ENCODE measurements at regions of chr13 and their contacts with region 1.

Region 1: DNA sequence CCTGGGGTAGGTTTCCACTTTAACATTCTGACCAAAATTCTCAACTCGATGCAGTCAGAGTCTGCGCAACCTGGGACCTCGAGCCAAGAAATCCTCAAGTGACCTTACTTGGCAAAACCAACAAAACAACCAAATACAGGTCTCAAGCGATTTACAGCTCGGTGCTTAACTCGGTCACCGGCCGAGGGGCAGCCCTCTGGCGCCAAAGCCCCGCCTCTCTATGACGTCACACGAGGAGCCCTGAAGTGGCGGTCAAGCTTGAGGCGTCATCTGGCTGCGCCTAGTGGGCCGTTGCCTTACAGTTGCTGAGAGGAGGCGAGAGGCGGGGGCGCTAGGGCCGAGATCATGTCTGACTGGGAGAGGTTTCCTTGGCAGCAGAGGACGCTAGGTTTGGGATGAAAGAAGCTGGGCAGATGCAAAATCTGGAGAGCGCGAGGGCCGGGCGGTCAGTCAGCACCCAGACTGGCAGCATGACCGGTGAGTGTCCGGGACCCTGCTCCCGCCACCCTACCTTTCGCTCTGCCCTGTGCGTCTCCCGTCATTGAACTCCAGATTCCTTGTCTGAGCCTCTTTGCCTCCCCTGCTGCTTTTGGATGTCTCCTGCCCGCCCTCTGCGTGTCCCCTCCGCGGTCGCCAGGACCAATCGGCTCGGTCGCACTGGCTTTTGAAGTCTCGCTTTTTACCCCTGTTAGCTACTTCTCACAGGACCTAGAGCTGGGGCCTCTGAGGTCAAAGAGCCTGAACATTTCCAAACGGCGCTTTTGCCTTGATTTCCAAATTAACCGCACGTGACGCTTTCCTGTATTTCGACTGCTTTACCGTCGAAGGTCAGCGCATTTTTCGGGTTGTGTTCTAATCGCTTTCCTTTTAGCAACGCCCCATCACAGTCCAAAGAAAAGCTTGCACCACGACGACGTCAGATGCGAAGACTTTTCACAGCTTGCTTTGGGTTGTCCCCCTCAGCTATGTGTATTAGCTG is at the start of gene CDADC1:
- DNase-seq: peak; percentile 96
- H3K4me3 Mint-ChIP-seq: peak within 1 kb of the TSS; percentile 98
- H3K27ac Mint-ChIP-seq: peak within 1 kb of the TSS; percentile 92
- H3K4me1 Mint-ChIP-seq: peaks cover 34% of the 10 kb centered on the region
- H3K27me3 Mint-ChIP-seq: no peaks in the 10 kb centered on the region
- total RNA-seq, gene CDADC1: 13.2 to 14.7 TPM

Region 2: DNA sequence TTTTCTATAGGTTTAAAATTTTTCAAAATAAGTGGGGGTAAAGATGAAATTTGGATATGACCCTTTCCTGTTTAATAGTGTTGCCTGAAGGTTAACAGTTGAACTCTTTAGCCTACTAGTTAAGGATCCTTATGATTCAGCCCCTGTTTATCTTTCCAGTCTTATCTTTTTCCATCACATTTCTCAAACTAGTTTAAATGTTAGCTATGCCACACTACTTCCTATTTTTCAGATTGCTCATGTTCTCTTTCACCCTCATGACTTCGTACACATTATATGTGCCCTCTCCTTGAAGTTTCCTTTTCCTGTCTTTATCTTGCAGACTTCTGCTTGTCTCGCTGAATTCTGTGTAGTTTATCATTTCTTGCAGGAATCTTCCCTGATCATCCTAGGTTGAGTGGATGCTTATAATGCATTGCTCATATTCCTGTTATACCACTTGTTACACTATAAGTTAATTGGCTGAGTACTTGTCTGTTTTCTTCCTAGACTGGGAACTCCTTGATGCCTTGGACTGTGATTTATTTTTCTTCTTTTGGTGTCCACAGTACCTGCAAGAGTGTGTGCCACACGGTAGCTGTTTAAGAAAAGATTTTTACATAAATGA is 185.5 kb before region 1 on chr13:
- CTCF ChIA-PET with region 1: no interaction called
- intact Hi-C with region 1: no loop called
- DNase-seq: no peak
- H3K4me3 Mint-ChIP-seq: no peak overlapping the region
- H3K27ac Mint-ChIP-seq: no peak overlapping the region
- H3K4me1 Mint-ChIP-seq: peaks cover 9% of the 10 kb centered on the region
- H3K27me3 Mint-ChIP-seq: no peaks in the 10 kb centered on the region

Region 3: GRCh38 chr13:49110122-49110912 is 137.6 kb before region 1 on chr13:
- CTCF ChIA-PET with region 1: no interaction called
- intact Hi-C with region 1: loop called (anchors 1 kb)
- DNase-seq: peak; percentile 87
- H3K4me3 Mint-ChIP-seq: peak overlapping the region; percentile 75
- H3K27ac Mint-ChIP-seq: peak overlapping the region; percentile 84
- H3K4me1 Mint-ChIP-seq: peaks cover 25% of the 10 kb centered on the region
- H3K27me3 Mint-ChIP-seq: no peaks in the 10 kb centered on the region

Region 4: GRCh38 chr13:49278211-49278610 is 30.3 kb after region 1 on chr13:
- CTCF ChIA-PET with region 1: interaction called, 17 read pairs
- intact Hi-C with region 1: loop called (anchors 1 kb)
- DNase-seq: no peak
- H3K4me3 Mint-ChIP-seq: no peak overlapping the region
- H3K27ac Mint-ChIP-seq: no peak overlapping the region
- H3K4me1 Mint-ChIP-seq: no peaks in the 10 kb centered on the region
- H3K27me3 Mint-ChIP-seq: no peaks in the 10 kb centered on the region

Region 5: DNA sequence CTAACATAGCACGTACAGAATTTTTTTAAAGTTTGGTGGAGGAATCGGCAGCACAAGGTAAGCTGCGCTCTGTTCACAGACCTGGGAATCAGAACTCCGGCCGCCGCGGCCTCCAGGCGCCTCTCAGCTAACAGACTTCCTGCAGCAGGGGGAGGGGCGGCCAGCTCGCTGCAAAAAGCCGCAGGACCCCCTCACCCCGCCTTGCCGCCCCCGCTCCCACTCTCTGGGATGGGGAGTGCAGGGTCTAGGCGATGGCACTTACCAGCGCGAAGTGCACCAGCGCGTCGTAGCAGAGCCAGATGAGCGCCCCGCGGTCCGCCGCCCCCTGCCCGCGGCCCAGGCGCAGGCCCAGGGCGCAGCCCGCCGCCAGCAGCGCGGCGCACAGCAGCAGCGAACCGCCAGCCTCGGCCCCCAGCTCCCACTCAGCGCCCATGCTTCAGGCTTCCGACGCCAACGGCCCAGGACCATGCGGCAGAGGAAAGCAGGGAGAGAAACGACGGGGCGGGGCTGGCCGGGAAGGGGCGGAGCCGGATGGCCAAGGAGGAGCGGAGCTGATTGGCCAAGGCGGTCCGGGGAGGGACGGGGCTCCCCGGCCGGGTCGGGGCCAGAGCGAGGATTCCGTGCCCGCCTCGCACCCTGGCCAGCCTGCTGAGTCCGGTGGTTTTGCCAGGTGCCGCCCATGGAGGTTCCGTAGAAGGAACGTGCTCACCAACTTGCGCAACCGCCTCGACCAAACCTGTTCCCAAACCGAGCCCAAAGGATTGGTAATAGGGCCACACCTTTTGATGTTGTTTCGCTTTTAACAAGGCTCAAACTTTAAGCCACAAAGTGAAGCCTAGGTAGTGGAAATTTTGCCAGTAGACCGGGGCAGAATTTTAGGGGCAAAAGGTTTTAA is 443.3 kb after region 1 on chr13 and contains the start of gene EBPL:
- CTCF ChIA-PET with region 1: no interaction called
- intact Hi-C with region 1: loop called (anchors 2 kb)
- DNase-seq: peak; percentile 94
- H3K4me3 Mint-ChIP-seq: peak within 1 kb of the TSS; percentile 86
- H3K27ac Mint-ChIP-seq: peak within 1 kb of the TSS; percentile 80
- H3K4me1 Mint-ChIP-seq: peaks cover 35% of the 10 kb centered on the region
- H3K27me3 Mint-ChIP-seq: no peaks in the 10 kb centered on the region
- total RNA-seq, gene EBPL: 46.8 to 49.3 TPM